Activated CD4-positive, alpha-beta memory T cell treated with anti-CD3 and anti-CD28 coated beads for 36 hours (primary cell): ENCODE measurements at regions of chr16 and their contacts with region 1.

Region 1: DNA sequence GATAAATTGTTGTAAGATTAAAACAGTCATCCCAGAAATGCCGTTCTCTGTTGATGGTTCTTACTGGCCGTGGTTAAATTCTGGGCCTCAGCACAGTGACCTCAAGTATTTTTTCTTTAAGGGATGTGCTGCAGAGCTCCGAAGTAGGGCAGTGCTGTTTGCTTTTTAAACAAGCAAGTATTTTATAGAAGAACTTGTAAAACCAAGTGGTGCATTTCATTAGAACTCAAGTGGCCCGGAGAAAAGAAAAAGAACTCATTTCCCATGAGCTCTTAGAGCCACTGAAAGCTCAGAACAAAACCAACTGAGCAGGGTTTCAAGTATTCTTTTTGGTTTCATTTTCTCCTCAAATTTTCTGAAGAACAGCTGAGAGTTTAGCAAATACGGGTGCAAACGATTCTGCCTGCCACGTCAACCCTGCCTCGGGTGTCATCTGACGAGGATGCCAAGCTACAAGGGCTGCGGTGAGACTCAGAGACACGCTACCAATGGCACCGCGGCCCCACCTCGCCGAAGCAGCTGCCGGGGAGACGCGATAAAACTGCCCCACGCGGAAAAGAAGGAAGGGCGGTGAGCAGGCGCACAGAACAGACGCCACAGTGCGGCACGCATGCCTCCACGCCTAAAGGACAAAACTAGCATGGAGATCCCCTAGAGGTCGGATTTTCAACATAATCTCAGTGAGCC is 6.3 kb downstream of the LMF1 start:
- DNase-seq: peak; percentile 89
- H3K4me3 Mint-ChIP-seq: peak overlapping the region; percentile 54
- H3K27ac Mint-ChIP-seq: peak overlapping the region; percentile 95
- H3K4me1 Mint-ChIP-seq: peaks cover 46% of the 10 kb centered on the region
- H3K27me3 Mint-ChIP-seq: no peaks in the 10 kb centered on the region

Region 2: GRCh38 chr16:982145-983043 is 17.9 kb after region 1 on chr16:
- CTCF ChIA-PET with region 1: no interaction called
- POLR2A ChIA-PET with region 1: interaction called, 11 read pairs
- intact Hi-C with region 1: no loop called
- DNase-seq: peak; percentile 34
- H3K4me3 Mint-ChIP-seq: peak overlapping the region; percentile 29
- H3K27ac Mint-ChIP-seq: no peak overlapping the region
- H3K4me1 Mint-ChIP-seq: peaks cover 7% of the 10 kb centered on the region
- H3K27me3 Mint-ChIP-seq: peaks cover 4% of the 10 kb centered on the region

Region 3: DNA sequence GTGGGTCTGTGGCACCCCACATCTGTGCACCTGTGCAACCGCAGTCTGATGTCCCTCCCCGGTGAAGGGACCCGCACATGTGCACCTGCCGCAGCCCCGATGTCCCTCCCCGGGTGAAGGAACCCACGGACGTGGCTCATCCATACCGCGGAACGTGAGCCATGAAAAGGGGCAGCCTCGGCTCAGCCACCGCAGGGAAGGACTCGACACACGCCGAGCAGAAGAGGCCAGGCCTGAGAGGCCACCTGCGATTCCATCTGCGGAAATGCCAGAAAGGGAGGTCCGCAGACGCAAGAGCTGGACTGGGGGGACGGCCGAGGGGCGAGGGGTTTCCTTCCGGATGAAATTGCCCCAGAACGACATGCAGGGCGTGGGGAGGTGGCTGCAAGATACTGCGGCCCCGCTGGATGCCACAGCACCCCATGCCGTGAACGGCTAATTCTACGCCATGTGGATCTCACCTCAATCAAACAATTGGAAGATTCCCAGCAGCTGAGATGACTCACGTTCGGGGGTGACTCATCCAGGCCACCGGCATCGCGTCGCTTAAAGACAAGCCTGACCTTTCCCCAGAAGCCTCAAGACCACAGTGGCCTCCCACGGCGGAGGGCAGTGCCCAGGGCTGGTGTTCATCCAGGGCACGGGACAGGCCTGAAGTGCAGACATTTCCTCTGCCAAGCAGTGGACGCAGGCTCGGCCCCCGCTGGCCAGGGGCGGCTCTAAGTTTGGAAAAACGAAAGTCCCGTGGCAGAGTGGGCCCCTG is 38.1 kb after region 1 on chr16:
- CTCF ChIA-PET with region 1: interaction called, 3 read pairs
- POLR2A ChIA-PET with region 1: interaction called, 12 read pairs
- intact Hi-C with region 1: loop called (anchors 5 kb)
- DNase-seq: peak; percentile 94
- H3K4me3 Mint-ChIP-seq: peak overlapping the region; percentile 34
- H3K27ac Mint-ChIP-seq: peak overlapping the region; percentile 77
- H3K4me1 Mint-ChIP-seq: peaks cover 58% of the 10 kb centered on the region
- H3K27me3 Mint-ChIP-seq: no peaks in the 10 kb centered on the region

Region 4: DNA sequence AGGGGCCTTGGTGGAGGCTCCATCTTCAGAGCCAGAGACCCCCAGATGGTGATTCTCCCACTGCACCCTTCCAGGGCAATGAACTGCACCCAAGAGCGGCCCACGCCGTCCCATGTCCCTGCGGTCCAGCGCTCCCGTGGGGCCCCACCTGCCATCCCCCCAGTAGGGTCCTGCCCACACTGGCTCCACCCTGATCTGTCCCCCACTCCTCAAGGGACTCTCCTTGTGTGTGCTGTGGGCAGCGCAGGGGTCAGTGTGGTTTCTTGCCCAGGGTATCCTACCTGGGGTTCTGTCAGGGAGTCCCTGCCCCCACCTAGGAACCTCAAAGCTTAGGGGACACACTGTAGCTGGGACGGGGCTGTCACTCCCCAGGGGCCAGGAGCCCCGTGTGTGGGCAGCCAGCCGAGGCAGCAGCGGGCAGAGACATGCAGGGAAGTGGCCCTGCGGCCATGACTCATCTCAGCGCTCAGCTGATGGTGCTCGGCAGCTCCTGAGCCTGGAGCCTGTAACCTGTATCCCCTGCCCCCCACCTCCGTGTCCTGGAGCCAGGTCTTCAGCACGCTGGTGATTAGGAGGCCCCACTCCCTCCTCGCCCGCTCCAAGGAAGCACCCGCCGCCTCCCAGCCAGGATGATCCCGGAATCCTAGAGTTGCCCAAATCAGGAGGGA is 72.4 kb after region 1 on chr16:
- CTCF ChIA-PET with region 1: no interaction called
- POLR2A ChIA-PET with region 1: no interaction called
- intact Hi-C with region 1: no loop called
- DNase-seq: no peak
- H3K4me3 Mint-ChIP-seq: no peak overlapping the region
- H3K27ac Mint-ChIP-seq: no peak overlapping the region
- H3K4me1 Mint-ChIP-seq: no peaks in the 10 kb centered on the region
- H3K27me3 Mint-ChIP-seq: peaks cover 6% of the 10 kb centered on the region